ENCODE measurements at regions of chr7 and their contacts with region 1.

Region 1: DNA sequence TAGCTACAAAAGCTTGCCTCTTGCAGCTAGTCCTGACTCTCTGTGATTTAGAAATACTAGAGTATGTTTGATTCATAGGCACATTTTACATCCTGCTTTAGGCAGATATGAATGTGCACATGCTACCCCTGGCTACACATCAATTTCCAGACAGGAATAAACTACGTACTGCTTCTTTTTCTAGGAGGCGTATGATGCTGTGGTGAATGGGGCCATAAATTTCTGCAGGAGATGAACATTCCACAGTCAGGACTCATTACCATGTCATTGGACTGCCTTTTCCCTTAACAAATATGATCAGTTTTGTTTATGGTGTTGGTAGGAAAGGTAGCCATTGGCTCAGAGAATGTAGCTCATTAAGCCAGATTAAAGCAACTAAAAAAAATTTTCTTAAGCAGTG is 50.1 kb upstream of the IFRD1 start:
- DNase-seq: no peak
- ATAC-seq: no peak
- H3K4me3 ChIP-seq: no peak overlapping the region
- H3K27ac ChIP-seq: no peak overlapping the region
- H3K4me1 ChIP-seq: no peaks in the 10 kb centered on the region
- H3K27me3 ChIP-seq: no peaks in the 10 kb centered on the region
- CTCF ChIP-seq: no peak
- POLR2A ChIP-seq: no peak

Region 2: DNA sequence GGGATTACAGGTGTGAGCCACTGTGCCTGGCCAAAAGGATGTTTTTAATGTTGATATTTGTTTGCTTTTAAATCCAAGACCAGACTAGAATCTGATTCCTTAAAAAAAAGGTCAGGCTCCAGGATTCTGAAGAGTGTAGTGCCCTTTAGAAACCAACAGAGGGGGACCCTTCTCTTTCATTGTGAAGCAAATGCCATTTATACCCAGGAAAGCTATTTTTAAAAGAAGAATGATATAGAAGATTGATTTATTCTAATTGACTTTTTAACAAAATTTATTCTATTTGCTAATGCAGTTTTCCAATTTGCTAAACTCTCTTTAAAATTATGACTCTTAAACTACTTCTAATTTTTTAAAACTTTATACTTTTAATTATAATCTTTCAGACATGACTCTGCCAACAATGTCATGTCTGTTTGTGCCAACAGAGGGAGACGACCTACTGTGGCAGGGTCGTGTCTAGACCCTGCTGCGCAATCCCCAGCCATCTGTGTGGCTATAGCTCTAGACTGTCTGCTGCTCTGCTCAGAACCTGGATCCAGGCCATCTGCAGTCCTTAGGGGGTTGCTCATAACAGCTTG is 636.8 kb before region 1 on chr7:
- in situ Hi-C with region 1: loop called in 2 of 4 experiments (anchors 10 to 25 kb)
- intact Hi-C with region 1: no loop called
- DNase-seq: no peak
- ATAC-seq: no peak
- H3K4me3 ChIP-seq: no peak overlapping the region
- H3K27ac ChIP-seq: no peak overlapping the region
- H3K4me1 ChIP-seq: no peaks in the 10 kb centered on the region
- H3K27me3 ChIP-seq: no peaks in the 10 kb centered on the region
- CTCF ChIP-seq: peak in 3 of 5 experiments; percentile 11 to 41 (median 39)
- POLR2A ChIP-seq: no peak

Region 3: DNA sequence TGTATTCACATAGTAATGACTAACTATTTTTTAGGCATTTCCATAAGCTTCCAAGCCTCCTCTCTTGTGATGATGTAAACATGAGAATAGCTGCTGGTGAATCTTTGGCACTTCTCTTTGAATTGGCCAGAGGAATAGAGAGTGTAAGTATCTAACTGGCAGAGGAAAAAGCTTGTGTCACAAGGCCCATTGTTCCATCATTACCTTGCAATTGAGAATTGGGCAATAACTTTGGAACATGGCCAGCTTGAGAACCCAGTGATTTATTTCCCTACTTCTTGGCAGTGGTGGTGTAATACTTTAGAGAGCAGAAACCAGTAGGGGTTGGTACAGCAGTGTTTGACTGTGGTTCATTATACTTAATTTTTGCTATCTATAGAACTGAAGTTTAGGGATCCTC is 62.1 kb after region 1 on chr7:
- in situ Hi-C with region 1: no loop called
- intact Hi-C with region 1: no loop called
- DNase-seq: peak; percentile 49 to 76
- ATAC-seq: peak; percentile 97 to 98
- H3K4me3 ChIP-seq: no peak overlapping the region
- H3K27ac ChIP-seq: peak overlapping the region; percentile 72 to 77 (median 74)
- H3K4me1 ChIP-seq: peaks cover 58 to 74% of the 10 kb centered on the region in 2 donors
- H3K27me3 ChIP-seq: no peaks in the 10 kb centered on the region
- CTCF ChIP-seq: no peak
- POLR2A ChIP-seq: no peak